Thyroid gland (tissue), 4 donors: ENCODE measurements at regions of chr19 and their contacts with region 1.

Region 1: GRCh38 chr19:35347171-35347929 is at the start of gene FFAR1:
- DNase-seq: no peak
- H3K4me3 ChIP-seq: no peak within 1 kb of the TSS
- H3K27ac ChIP-seq: no peak within 1 kb of the TSS
- H3K4me1 ChIP-seq: no peaks in the 10 kb centered on the region
- H3K27me3 ChIP-seq: no peaks in the 10 kb centered on the region
- CTCF ChIP-seq: no peak
- POLR2A ChIP-seq: no peak
- total RNA-seq, gene FFAR1: not detected

Region 2: GRCh38 chr19:35279985-35280821 is 67.1 kb before region 1 on chr19:
- intact Hi-C with region 1: loop called (anchors 5 kb)
- DNase-seq: peak; percentile 87 to 90
- H3K4me3 ChIP-seq: no peak overlapping the region
- H3K27ac ChIP-seq: peak overlapping the region in 2 of 3 donors; percentile 28 to 41
- H3K4me1 ChIP-seq: peaks cover 11 to 17% of the 10 kb centered on the region in 2 donors
- H3K27me3 ChIP-seq: no peaks in the 10 kb centered on the region
- CTCF ChIP-seq: no peak
- POLR2A ChIP-seq: no peak

Region 3: GRCh38 chr19:35484252-35485036 is 137.1 kb after region 1 on chr19:
- intact Hi-C with region 1: no loop called
- DNase-seq: peak; percentile 20 to 38
- H3K4me3 ChIP-seq: no peak overlapping the region
- H3K27ac ChIP-seq: peak overlapping the region in 1 of 3 donors; percentile 70
- H3K4me1 ChIP-seq: peaks cover 5 to 19% of the 10 kb centered on the region in 2 donors
- H3K27me3 ChIP-seq: no peaks in the 10 kb centered on the region
- CTCF ChIP-seq: no peak
- POLR2A ChIP-seq: no peak